A549 (cell line): ENCODE measurements at regions of chr10 and their contacts with region 1.

Region 1: DNA sequence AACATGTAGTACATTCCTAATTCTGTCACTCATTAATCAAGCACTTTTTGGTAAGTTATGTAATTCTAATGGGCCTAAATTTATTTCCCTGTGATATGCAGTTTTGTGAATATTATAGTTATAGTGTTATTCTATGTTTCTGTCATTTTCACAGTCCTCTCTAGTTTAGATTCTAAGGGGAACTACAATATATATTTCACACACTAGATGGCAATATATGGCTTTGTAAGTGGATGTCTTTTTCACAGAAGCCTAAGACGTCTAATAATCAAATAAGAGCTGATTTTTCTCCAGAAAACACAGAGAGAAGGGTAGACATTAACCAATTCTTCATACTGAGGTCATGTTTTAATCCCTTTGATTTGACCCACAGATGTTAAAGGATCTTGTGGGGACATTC is 18.0 kb downstream of the RNLS start:
- DNase-seq: peak; percentile 15 to 39
- ATAC-seq: peak; percentile 81 to 89
- H3K4me3 ChIP-seq: no peak overlapping the region
- H3K27ac ChIP-seq: no peak overlapping the region
- H3K4me1 ChIP-seq: peaks cover 10% of the 10 kb centered on the region; the same call in 2 of the 3 replicates
- CTCF ChIP-seq: peak; percentile 64
- EP300 ChIP-seq: no peak
- POLR2A ChIP-seq: no peak
- RAD21 ChIP-seq: peak; percentile 82 to 85

Region 2: DNA sequence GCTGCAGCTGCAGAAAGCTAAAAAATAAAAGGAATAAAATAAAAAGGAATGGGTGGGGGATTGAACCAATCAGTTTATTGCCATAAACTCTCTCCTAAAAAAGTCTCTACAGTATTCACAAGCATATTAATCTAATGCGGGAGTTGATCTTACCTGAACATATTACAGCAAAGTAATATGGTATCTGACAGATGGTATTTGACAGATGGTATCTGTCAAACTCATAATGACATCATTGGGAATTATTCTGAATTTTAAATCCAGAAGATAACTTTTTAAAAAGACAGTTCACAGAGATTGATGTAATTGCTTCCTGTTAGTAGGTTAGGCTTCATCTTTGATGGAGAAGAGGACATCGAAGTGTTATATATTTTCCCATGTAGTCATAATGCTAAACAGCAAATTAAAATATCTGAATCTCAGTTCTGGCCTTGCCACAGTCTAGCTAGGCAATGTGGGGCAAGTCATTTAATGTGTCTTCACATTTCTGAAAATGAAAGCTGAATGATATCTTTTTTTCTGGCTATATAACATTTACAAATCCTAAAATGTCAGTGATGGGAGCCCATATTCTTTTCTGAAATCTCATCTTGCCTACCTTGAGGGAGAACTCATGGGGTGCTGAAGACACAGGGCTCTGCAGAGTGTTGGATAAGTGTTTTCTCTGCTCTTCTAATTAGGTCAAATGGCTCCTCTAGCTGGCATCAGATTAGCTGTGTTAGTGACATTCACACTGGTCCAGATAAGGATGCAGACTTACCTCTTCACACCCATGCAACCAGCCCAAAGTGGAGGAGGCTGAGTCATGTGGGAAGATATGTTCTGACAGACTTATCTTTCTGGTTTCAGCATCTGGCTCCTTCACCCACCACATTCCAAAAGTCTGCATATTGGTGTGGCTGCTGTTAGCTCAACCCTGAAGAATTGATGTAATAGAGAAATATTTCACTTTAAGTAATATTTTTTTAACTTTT is 235.4 kb after region 1 on chr10:
- CTCF ChIA-PET with region 1: interaction called, 12 read pairs
- POLR2A ChIA-PET with region 1: no interaction called
- DNase-seq: no peak
- ATAC-seq: no peak
- H3K4me3 ChIP-seq: no peak overlapping the region
- H3K27ac ChIP-seq: no peak overlapping the region
- H3K4me1 ChIP-seq: peaks cover 2% of the 10 kb centered on the region; the same call in 1 of the 3 replicates
- CTCF ChIP-seq: no peak
- EP300 ChIP-seq: no peak
- POLR2A ChIP-seq: no peak
- RAD21 ChIP-seq: no peak